Calu3 (cell line): ENCODE measurements at regions of chr11 and their contacts with region 1.

Region 1: DNA sequence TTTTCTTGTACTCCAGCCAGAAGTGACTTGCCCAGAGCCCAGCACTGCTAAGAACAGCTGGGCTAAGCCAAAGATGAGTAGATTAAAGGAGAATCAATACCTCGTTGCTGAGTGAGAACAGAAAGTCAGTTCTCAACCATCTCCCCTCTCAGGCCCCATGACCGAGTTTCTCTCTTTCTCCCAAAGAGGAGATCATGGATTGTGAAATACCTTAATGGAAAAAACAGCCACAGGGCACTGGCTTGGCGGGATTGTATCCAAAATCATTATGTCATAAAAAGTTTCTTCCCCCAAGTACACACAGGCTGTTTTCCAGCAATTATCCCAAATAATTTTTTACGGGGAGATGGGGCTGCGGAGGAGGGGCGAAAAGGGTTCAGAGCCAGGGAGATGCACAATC is 111.8 kb upstream of the TMEM45B start:
- DNase-seq: no peak
- H3K4me3 Mint-ChIP-seq: no peak overlapping the region
- H3K27ac Mint-ChIP-seq: no peak overlapping the region
- H3K4me1 Mint-ChIP-seq: peaks cover 55% of the 10 kb centered on the region
- H3K27me3 Mint-ChIP-seq: no peaks in the 10 kb centered on the region
- CTCF ChIP-seq: no peak

Region 2: GRCh38 chr11:129743111-129743815 is 39.4 kb after region 1 on chr11:
- CTCF ChIA-PET with region 1: no interaction called
- intact Hi-C with region 1: loop called (anchors 5 kb)
- DNase-seq: no peak
- H3K4me3 Mint-ChIP-seq: no peak overlapping the region
- H3K27ac Mint-ChIP-seq: no peak overlapping the region
- H3K4me1 Mint-ChIP-seq: peaks cover 9% of the 10 kb centered on the region
- H3K27me3 Mint-ChIP-seq: no peaks in the 10 kb centered on the region
- CTCF ChIP-seq: no peak